Heart left ventricle (tissue), 16 donors: ENCODE measurements at regions of chr7 and their contacts with region 1.

Region 1: DNA sequence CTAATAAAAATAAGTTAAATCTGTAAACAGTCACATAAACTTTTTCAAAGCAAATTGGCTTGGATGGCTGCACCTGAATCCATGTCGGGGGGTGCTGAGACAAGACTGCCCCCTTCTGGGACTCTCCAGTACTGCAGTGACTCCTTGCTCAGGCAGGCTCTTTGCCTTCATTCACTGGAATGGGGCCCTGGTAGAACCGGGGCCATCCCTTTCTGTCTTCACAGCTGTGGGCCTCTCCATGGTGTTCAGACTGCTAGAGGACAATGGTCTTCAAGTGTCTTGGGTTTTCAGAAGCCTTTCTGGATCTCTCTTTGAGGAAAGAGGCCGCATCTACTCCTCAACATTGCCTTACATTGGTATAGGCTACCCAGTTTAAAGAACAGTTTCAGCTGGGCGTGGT is 16.1 kb upstream of the IMPDH1 start:
- DNase-seq: peak; percentile 55 to 76 (median 66)
- ATAC-seq: peak; percentile 45 to 60 (median 56)
- H3K4me3 ChIP-seq: no peak overlapping the region
- H3K27ac ChIP-seq: no peak overlapping the region
- H3K4me1 ChIP-seq: peaks cover 0 to 14% (median 0%) of the 10 kb centered on the region in 12 donors
- H3K27me3 ChIP-seq: no peaks in the 10 kb centered on the region
- CTCF ChIP-seq: peak; percentile 79 to 98 (median 86)
- POLR2A ChIP-seq: no peak

Region 2: DNA sequence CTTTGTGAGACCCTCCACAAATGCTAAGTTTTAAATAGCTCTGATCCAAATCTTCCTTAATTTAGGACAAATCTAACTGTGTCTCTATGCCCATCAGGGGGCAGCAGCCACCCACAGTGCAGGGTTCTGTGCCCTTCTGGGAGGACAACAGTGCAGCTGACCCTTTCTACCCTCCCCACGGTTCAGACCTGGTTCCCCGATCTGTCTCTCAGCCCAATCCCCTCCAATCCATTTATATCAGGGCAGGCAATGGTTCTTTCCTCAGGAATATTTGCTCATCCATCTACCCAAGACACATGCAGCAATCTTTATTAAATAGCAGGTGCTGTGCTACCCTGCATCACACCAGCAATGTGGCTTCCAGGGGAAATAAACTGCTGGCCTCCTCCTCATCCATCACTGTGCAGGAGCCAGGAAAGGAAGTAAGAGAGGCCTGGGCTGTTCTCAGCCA is 78.2 kb before region 1 on chr7:
- intact Hi-C with region 1: loop called in 1 of 10 experiments (anchors 2 kb)
- DNase-seq: peak in 3 of 5 donors; percentile 49 to 67 (median 53)
- ATAC-seq: peak in 2 of 4 donors; percentile 25 to 42
- H3K4me3 ChIP-seq: no peak overlapping the region
- H3K27ac ChIP-seq: no peak overlapping the region
- H3K4me1 ChIP-seq: peaks cover 0 to 22% (median 9%) of the 10 kb centered on the region in 12 donors
- H3K27me3 ChIP-seq: peaks cover 0 to 21% (median 6%) of the 10 kb centered on the region in 9 donors
- CTCF ChIP-seq: peak; percentile 51 to 74 (median 67)
- POLR2A ChIP-seq: no peak

Region 3: GRCh38 chr7:128398016-128398840 is 27.6 kb before region 1 on chr7:
- intact Hi-C with region 1: loop called in 8 of 10 experiments (anchors 1 to 2 kb)
- DNase-seq: peak in 2 of 5 donors; percentile 53 to 57
- ATAC-seq: peak in 3 of 4 donors; percentile 59 to 73 (median 72)
- H3K4me3 ChIP-seq: no peak overlapping the region
- H3K27ac ChIP-seq: no peak overlapping the region
- H3K4me1 ChIP-seq: no peaks in the 10 kb centered on the region
- H3K27me3 ChIP-seq: no peaks in the 10 kb centered on the region
- CTCF ChIP-seq: peak; percentile 88 to 98 (median 93)
- POLR2A ChIP-seq: no peak

Region 4: GRCh38 chr7:129083525-129083924 is 657.7 kb after region 1 on chr7:
- intact Hi-C with region 1: no loop called
- DNase-seq: no peak
- ATAC-seq: no peak
- H3K4me3 ChIP-seq: no peak overlapping the region
- H3K27ac ChIP-seq: no peak overlapping the region
- H3K4me1 ChIP-seq: no peaks in the 10 kb centered on the region
- H3K27me3 ChIP-seq: peaks cover 0 to 13% (median 0%) of the 10 kb centered on the region in 9 donors
- CTCF ChIP-seq: no peak
- POLR2A ChIP-seq: no peak